ENCODE measurements at regions of chr7 and their contacts with region 1.

Region 1: DNA sequence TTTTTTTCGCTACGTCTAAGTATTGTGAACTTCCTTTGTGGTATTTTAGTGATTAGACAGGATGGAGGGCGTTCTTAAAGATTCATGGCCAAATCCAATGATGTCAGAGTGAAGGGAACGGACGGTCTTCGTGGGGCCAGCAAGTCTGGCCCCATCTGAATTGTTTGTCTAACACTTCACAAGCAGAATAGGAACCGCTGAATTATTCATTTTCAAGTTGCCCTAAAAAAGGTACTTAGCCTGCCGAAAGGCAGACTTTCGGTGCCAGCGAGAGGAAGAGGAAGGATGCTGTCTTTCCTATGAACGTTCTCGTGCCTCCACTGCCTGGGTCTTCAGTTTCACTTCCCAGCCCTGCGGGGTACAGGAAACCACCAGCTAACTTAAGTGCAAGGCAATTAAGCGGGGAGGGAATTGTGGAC is 145.7 kb upstream of the SH2B2 start:
- DNase-seq: no peak
- H3K4me3 Mint-ChIP-seq: no peak overlapping the region
- H3K27ac Mint-ChIP-seq: no peak overlapping the region
- H3K4me1 Mint-ChIP-seq: no peaks in the 10 kb centered on the region
- H3K27me3 Mint-ChIP-seq: no peaks in the 10 kb centered on the region
- CTCF ChIP-seq: no peak

Region 2: DNA sequence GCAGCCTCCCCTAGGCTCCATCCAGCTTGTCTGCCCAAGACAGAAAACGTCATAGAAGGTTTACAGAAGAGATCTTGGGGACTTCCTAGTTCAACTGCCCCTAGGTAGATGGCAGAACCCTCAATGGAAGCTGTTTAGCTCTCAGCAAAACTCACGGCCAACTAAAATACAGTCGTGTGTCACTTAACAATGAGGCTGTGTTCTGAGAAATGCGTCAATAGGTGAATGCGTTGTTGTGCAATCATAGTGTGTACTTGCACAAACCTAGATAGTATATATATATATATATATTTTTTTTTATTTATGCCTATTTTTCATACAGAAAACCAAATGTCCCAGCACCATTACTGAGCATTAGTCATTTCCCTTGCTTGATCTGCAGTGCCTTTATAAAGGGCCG is 45.3 kb after region 1 on chr7:
- CTCF ChIA-PET with region 1: no interaction called
- POLR2A ChIA-PET with region 1: no interaction called
- intact Hi-C with region 1: loop called (anchors 2 kb)
- DNase-seq: peak; percentile 46
- H3K4me3 Mint-ChIP-seq: no peak overlapping the region
- H3K27ac Mint-ChIP-seq: no peak overlapping the region
- H3K4me1 Mint-ChIP-seq: no peaks in the 10 kb centered on the region
- H3K27me3 Mint-ChIP-seq: no peaks in the 10 kb centered on the region
- CTCF ChIP-seq: no peak